AG04449 (cell line): ENCODE measurements at regions of chr1 and their contacts with region 1.

Region 1: GRCh38 chr1:55277377-55278130 is 62.4 kb upstream of the USP24 start:
- DNase-seq: no peak
- H3K4me3 ChIP-seq: no peak overlapping the region
- CTCF ChIP-seq: peak; percentile 82

Region 2: GRCh38 chr1:55071477-55071876 is 206.1 kb before region 1 on chr1:
- CTCF ChIA-PET with region 1: interaction called, 18 read pairs
- POLR2A ChIA-PET with region 1: no interaction called
- DNase-seq: no peak
- H3K4me3 ChIP-seq: no peak overlapping the region
- CTCF ChIP-seq: peak; percentile 73

Region 3: DNA sequence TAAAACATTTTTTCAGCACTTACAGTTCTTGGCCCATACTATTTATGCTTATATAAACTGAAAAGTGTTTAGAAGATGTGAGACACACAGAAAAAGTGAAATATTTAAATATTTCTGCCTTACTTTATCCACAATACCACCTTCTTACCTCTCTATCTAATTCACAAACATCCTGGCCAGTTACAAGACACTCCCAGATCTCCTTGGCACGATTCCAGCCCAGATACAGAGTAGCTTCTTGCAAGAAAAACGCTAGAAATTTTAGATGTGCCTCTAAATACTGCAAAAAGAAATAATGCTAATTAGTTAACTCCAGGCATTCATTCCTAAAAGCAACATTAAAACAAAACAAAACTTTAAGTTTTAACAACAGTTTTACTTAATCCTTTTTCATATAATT is 130.8 kb before region 1 on chr1:
- CTCF ChIA-PET with region 1: interaction called, 331 read pairs
- POLR2A ChIA-PET with region 1: no interaction called
- DNase-seq: no peak
- H3K4me3 ChIP-seq: no peak overlapping the region
- CTCF ChIP-seq: no peak

Region 4: GRCh38 chr1:55246896-55247295 is 30.7 kb before region 1 on chr1:
- CTCF ChIA-PET with region 1: interaction called, 10 read pairs
- POLR2A ChIA-PET with region 1: no interaction called
- DNase-seq: no peak
- H3K4me3 ChIP-seq: no peak overlapping the region
- CTCF ChIP-seq: no peak

Region 5: DNA sequence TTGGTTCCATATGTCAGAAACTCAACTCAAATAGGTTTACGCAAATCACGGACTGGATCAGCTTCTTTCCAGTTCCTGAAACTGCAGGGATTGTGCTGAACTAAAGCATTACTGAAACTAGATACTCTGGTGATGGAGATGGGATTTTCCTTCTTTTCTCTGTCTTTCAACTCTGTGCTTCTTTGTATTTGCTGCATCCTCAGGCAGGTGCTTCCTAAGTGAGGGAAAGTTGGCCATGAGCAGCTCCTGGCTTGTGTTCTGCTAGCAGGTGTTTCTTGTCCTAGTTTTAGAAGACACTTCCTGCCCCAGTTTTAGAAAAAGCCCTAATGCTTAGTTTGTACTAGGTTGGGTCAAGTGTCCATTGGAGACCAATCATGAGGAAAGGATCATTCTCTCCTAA is 24.4 kb after region 1 on chr1:
- CTCF ChIA-PET with region 1: interaction called, 13 read pairs
- POLR2A ChIA-PET with region 1: no interaction called
- DNase-seq: no peak
- H3K4me3 ChIP-seq: no peak overlapping the region
- CTCF ChIP-seq: no peak

Region 6: GRCh38 chr1:55670331-55671082 is 393.0 kb after region 1 on chr1:
- CTCF ChIA-PET with region 1: no interaction called
- POLR2A ChIA-PET with region 1: no interaction called
- DNase-seq: no peak
- H3K4me3 ChIP-seq: no peak overlapping the region
- CTCF ChIP-seq: no peak

Region 7: DNA sequence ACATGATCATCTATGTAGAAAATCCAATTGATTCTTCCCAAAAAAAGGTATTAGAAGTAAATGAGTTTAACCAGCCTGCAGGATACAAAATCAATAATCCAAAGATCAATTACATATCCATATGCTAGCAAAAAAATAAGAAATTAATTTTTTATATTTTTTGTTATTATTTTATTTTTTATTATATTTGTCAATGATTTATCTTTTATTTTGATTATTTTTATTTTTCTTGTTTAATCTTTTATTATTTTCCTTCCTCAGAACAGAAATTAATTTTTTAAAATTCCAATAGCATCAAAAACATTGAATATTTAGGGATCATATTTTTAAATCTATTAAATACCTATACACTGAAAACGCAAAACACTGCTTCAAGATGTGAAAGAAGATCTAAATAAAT is 970.6 kb after region 1 on chr1:
- CTCF ChIA-PET with region 1: no interaction called
- POLR2A ChIA-PET with region 1: no interaction called
- DNase-seq: no peak
- H3K4me3 ChIP-seq: no peak overlapping the region
- CTCF ChIP-seq: no peak

Region 8: GRCh38 chr1:56584910-56585528 is 1307.5 kb after region 1 on chr1:
- CTCF ChIA-PET with region 1: interaction called, 230 read pairs
- POLR2A ChIA-PET with region 1: no interaction called
- DNase-seq: peak; percentile 33
- H3K4me3 ChIP-seq: no peak overlapping the region
- CTCF ChIP-seq: peak; percentile 54